ENCODE measurements at regions of chr19 and their contacts with region 1.

Region 1: GRCh38 chr19:41887711-41888382 is 4.9 kb downstream of the ARHGEF1 start:
- DNase-seq: peak; percentile 67 to 91 (median 81)
- ATAC-seq: peak; percentile 58 to 62 (median 60)
- H3K4me3 ChIP-seq: peak overlapping the region; percentile 78 to 99
- H3K4me3 Mint-ChIP-seq: peak overlapping the region; percentile 88 to 98 (median 95)
- H3K27ac ChIP-seq: peak overlapping the region; percentile 90
- H3K27ac Mint-ChIP-seq: peak overlapping the region; percentile 97 to 98
- H3K4me1 ChIP-seq: peaks cover 29 to 84% of the 10 kb centered on the region in 2 experiments
- H3K4me1 Mint-ChIP-seq: peaks cover 58 to 72% (median 62%) of the 10 kb centered on the region in 3 donors
- H3K27me3 ChIP-seq: no peaks in the 10 kb centered on the region
- H3K27me3 Mint-ChIP-seq: no peaks in the 10 kb centered on the region

Region 2: DNA sequence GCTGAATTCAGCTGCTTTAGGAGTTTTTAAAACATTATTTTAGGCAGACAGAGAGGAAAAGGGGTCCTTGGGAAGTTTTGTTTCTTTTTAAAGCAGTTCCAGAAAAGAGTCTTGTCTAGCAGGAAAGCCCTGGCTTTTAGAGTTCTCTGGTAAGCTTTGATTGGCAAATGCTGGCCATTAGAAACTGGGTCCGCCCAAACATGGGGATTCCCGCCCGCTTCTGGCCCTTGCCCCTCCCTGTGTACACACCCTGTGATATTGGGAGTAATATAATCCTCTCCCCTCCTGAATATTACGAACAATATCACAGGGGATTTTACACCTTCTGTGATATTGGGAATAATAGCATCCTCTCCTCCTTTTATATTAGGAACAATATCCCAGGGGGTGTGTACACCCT is 386.0 kb before region 1 on chr19:
- CTCF ChIA-PET with region 1: no interaction called
- POLR2A ChIA-PET with region 1: no interaction called
- DNase-seq: no peak
- ATAC-seq: no peak
- H3K4me3 ChIP-seq: no peak overlapping the region
- H3K4me3 Mint-ChIP-seq: no peak overlapping the region
- H3K27ac ChIP-seq: no peak overlapping the region
- H3K27ac Mint-ChIP-seq: no peak overlapping the region
- H3K4me1 ChIP-seq: no peaks in the 10 kb centered on the region
- H3K4me1 Mint-ChIP-seq: peaks cover 0 to 3% (median 0%) of the 10 kb centered on the region in 3 donors
- H3K27me3 ChIP-seq: peaks cover 2 to 34% of the 10 kb centered on the region in 2 experiments
- H3K27me3 Mint-ChIP-seq: peaks cover 61 to 65% of the 10 kb centered on the region in 2 donors

Region 3: GRCh38 chr19:41570639-41571112 is 317.2 kb before region 1 on chr19:
- CTCF ChIA-PET with region 1: no interaction called
- POLR2A ChIA-PET with region 1: no interaction called
- DNase-seq: peak; percentile 62 to 94 (median 82)
- ATAC-seq: peak; percentile 90 to 96 (median 94)
- H3K4me3 ChIP-seq: no peak overlapping the region
- H3K4me3 Mint-ChIP-seq: peak overlapping the region in 1 of 3 donors; percentile 16
- H3K27ac ChIP-seq: no peak overlapping the region
- H3K27ac Mint-ChIP-seq: peak overlapping the region; percentile 61 to 75
- H3K4me1 ChIP-seq: peaks cover 2 to 23% of the 10 kb centered on the region in 2 experiments
- H3K4me1 Mint-ChIP-seq: peaks cover 47 to 55% (median 51%) of the 10 kb centered on the region in 3 donors
- H3K27me3 ChIP-seq: no peaks in the 10 kb centered on the region
- H3K27me3 Mint-ChIP-seq: no peaks in the 10 kb centered on the region

Region 4: DNA sequence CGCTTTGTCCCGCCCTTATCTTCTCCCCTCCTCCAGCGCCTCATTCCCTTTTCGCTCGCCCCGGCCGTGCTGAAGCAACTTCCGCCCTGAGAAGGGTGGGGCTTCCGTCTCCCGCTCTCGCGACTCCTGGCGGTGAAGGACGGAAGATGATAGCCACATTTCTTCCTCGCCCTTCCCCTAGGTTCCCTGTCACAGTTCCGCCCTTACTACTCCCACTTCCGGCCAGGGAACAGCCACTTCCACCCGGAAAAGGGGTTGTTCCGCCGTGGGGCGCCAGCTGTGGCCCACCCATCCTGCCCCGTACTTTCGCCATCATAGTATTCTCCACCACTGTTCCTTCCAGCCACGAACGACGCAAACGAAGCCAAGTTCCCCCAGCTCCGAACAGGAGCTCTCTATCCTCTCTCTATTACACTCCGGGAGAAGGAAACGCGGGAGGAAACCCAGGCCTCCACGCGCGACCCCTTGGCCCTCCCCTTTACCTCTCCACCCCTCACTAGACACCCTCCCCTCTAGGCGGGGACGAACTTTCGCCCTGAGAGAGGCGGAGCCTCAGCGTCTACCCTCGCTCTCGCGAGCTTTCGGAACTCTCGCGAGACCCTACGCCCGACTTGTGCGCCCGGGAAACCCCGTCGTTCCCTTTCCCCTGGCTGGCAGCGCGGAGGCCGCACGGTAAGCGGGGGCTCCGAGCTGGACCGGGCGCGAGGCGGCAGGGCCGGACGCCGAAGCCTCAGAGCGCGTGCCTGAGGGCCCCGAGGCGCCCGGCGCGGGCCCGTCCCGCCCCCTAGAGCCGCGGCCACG is 28.0 kb before region 1 on chr19 and contains the start of gene RPS19:
- CTCF ChIA-PET with region 1: interaction called in 1 of 2 experiments, 15 read pairs
- POLR2A ChIA-PET with region 1: interaction called in 1 of 2 experiments, 9 read pairs
- DNase-seq: peak; percentile 93 to 99 (median 97)
- ATAC-seq: peak; percentile 86 to 90 (median 88)
- H3K4me3 ChIP-seq: peak within 1 kb of the TSS; percentile 83 to 96
- H3K4me3 Mint-ChIP-seq: peak within 1 kb of the TSS; percentile 80 to 95 (median 93)
- H3K27ac ChIP-seq: peak within 1 kb of the TSS; percentile 88
- H3K27ac Mint-ChIP-seq: peak within 1 kb of the TSS; percentile 96 to 99
- H3K4me1 ChIP-seq: peaks cover 27 to 48% of the 10 kb centered on the region in 2 experiments
- H3K4me1 Mint-ChIP-seq: peaks cover 41 to 48% (median 45%) of the 10 kb centered on the region in 3 donors
- H3K27me3 ChIP-seq: no peaks in the 10 kb centered on the region
- H3K27me3 Mint-ChIP-seq: no peaks in the 10 kb centered on the region
- total RNA-seq, gene RPS19: 3,043 to 4,286 (median 3,822) TPM

Region 5: DNA sequence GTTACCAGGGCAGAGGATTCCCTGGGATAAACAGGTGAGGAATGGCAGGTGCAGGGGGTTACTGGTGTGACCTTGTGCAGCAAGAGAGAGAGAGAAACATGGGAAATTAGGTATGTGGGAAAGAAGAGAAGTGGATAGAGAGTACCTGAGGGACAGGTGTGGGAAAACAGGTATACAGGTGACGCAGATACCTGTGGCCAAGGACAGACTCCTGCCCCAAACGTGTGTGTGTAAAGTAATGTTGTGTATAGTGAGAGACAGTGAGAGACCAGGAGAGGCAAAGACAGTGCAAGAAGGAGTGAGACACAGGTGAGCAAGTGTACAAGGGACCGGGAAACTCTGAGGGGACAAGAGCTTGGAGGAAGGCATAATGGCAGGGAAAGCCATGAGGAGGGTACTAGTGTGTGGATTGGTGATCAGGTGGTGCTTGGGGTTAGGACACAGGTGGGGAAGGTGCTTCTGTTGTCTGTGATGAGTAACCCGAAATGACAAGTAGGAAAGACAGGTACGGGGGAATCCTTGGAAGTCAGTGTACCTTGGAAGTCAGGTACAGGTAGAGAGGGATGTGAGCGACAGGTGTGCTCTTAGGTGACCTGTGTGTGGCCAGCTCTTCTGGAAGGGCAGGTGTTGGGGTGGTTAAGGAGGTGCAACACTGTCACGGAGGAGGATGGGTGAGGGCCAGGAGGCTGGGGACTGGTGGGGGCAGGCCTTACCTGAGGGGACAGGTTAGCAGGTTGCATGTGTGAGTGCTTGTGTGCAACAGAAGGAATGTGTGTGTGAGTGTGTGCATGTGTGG is 37.6 kb after region 1 on chr19:
- CTCF ChIA-PET with region 1: no interaction called
- POLR2A ChIA-PET with region 1: no interaction called
- DNase-seq: no peak
- ATAC-seq: no peak
- H3K4me3 ChIP-seq: no peak overlapping the region
- H3K4me3 Mint-ChIP-seq: no peak overlapping the region
- H3K27ac ChIP-seq: no peak overlapping the region
- H3K27ac Mint-ChIP-seq: no peak overlapping the region
- H3K4me1 ChIP-seq: peaks cover 19 to 48% of the 10 kb centered on the region in 2 experiments
- H3K4me1 Mint-ChIP-seq: peaks cover 31 to 39% (median 34%) of the 10 kb centered on the region in 3 donors
- H3K27me3 ChIP-seq: peaks cover 7 to 37% of the 10 kb centered on the region in 2 experiments
- H3K27me3 Mint-ChIP-seq: peaks cover 8% of the 10 kb centered on the region in 2 donors

Region 6: GRCh38 chr19:42065051-42065450 is 177.2 kb after region 1 on chr19:
- CTCF ChIA-PET with region 1: no interaction called
- POLR2A ChIA-PET with region 1: no interaction called
- DNase-seq: no peak
- ATAC-seq: no peak
- H3K4me3 ChIP-seq: no peak overlapping the region
- H3K4me3 Mint-ChIP-seq: no peak overlapping the region
- H3K27ac ChIP-seq: no peak overlapping the region
- H3K27ac Mint-ChIP-seq: no peak overlapping the region
- H3K4me1 ChIP-seq: peaks cover 0 to 15% of the 10 kb centered on the region in 2 experiments
- H3K4me1 Mint-ChIP-seq: no peaks in the 10 kb centered on the region
- H3K27me3 ChIP-seq: peaks cover 0 to 68% of the 10 kb centered on the region in 2 experiments
- H3K27me3 Mint-ChIP-seq: peaks cover 7 to 11% of the 10 kb centered on the region in 2 donors

Measured in T-cell (primary cell).